Psoas muscle (tissue), 8 donors: ENCODE measurements at regions of chr1 and their contacts with region 1.

Region 1: DNA sequence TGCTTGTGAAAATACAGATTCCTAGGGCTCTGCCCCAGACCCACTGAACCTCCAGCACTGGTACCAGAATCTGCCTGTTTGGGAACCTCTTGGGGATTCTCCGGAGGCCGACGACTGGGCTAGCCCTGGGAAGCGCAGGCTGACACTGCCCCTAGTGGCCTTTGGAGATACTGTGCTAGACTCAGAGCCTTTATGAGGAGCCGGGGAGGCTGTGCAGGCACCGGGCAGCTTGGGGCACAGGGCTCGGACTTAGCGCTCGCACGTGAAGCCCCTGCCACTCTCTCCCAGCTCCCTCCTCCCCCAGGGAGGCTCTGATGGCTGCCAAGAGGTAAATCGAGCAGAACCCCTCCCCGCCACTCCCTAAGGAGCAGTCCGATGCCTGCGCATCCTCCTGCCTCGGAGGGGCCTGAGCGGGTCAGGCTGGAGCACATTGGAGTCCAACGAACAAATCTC is 144.6 kb upstream of the TNR start:
- DNase-seq: peak; percentile 36 to 68
- ATAC-seq: peak; percentile 47 to 76 (median 70)
- H3K4me3 ChIP-seq: no peak overlapping the region
- H3K27ac ChIP-seq: no peak overlapping the region
- H3K4me1 ChIP-seq: no peaks in the 10 kb centered on the region
- H3K27me3 ChIP-seq: no peaks in the 10 kb centered on the region
- CTCF ChIP-seq: peak; percentile 61

Region 2: GRCh38 chr1:175146529-175147213 is 741.3 kb before region 1 on chr1:
- intact Hi-C with region 1: loop called (anchors 10 kb)
- DNase-seq: peak; percentile 61 to 82
- ATAC-seq: peak; percentile 66 to 94 (median 84)
- H3K4me3 ChIP-seq: no peak overlapping the region
- H3K27ac ChIP-seq: no peak overlapping the region
- H3K4me1 ChIP-seq: no peaks in the 10 kb centered on the region
- H3K27me3 ChIP-seq: peaks cover 0 to 3% (median 0%) of the 10 kb centered on the region in 3 donors
- CTCF ChIP-seq: peak; percentile 69

Region 3: GRCh38 chr1:175481126-175482066 is 406.6 kb before region 1 on chr1:
- intact Hi-C with region 1: loop called in 1 of 2 experiments (anchors 5 kb)
- DNase-seq: no peak
- ATAC-seq: no peak
- H3K4me3 ChIP-seq: no peak overlapping the region
- H3K27ac ChIP-seq: no peak overlapping the region
- H3K4me1 ChIP-seq: no peaks in the 10 kb centered on the region
- H3K27me3 ChIP-seq: no peaks in the 10 kb centered on the region
- CTCF ChIP-seq: peak; percentile 52